ENCODE measurements at regions of chr18 and their contacts with region 1.

Region 1: GRCh38 chr18:36688020-36688965 is 140.5 kb downstream of the TPGS2 start:
- DNase-seq: no peak
- H3K4me3 ChIP-seq: no peak overlapping the region
- CTCF ChIP-seq: peak; percentile 89

Region 2: GRCh38 chr18:36582988-36583745 is 105.1 kb before region 1 on chr18:
- CTCF ChIA-PET with region 1: no interaction called
- POLR2A ChIA-PET with region 1: no interaction called
- DNase-seq: no peak
- H3K4me3 ChIP-seq: no peak overlapping the region
- CTCF ChIP-seq: no peak

Region 3: DNA sequence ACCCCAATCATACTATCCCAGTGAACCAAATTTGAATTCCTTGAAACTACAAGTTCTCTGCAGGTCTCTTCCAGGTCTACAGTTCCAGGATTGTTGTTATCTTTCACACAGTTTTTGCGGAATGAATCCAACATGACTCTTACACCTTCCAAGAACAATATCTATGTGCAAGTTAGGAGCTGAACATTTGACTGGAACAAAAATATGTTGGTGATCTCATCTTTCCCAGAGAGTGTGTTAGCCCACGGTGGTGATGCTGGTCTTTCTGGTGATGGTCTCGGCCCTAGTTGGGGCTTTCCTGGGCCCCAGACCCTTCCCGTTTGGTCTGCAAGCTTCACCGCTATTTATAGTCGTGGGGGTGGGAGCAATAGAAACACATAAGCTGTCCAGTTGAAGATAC is 33.2 kb before region 1 on chr18:
- CTCF ChIA-PET with region 1: interaction called, 12 read pairs
- POLR2A ChIA-PET with region 1: no interaction called
- DNase-seq: no peak
- H3K4me3 ChIP-seq: no peak overlapping the region
- CTCF ChIP-seq: no peak

Region 4: GRCh38 chr18:36665952-36666351 is 22.3 kb before region 1 on chr18:
- CTCF ChIA-PET with region 1: interaction called, 38 read pairs
- POLR2A ChIA-PET with region 1: no interaction called
- DNase-seq: no peak
- H3K4me3 ChIP-seq: no peak overlapping the region
- CTCF ChIP-seq: no peak

Region 5: DNA sequence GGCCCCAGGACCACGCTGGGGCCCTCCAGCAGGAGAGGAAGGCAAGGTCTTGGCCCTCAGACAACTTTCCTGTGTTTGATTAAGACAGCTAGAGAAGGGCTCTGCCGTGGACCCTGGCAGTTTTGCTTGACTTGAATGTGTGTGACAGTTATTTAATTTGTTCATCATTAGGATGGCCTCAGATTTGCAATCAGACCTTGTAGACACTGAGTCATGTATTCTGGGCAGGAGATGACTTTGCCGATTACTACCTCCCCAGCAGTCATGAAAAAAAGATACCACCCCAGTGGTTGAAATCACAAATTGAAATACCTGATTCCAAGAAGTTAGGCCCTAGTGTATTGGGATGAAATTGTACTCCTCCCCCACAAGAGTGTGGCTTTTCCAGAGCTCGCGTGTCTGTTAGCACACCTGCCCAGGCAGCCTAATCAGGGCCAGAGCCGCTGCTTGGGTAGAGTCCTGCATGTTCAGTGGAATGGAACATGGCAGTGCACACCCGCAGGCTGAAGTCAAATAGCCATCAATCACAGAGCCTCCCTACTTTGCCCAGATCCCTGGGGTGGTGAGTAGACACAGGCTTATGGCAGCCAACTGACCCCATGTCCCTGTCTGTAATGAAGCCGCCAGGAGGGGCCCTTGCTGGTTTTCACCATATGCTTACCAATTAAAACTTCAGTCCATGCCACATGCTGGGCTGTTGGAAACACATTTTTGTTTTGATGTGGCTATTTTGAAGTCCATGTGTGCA is 18.0 kb after region 1 on chr18:
- CTCF ChIA-PET with region 1: interaction called, 32 read pairs
- POLR2A ChIA-PET with region 1: interaction called, 6 read pairs
- DNase-seq: no peak
- H3K4me3 ChIP-seq: no peak overlapping the region
- CTCF ChIP-seq: no peak

Region 6: DNA sequence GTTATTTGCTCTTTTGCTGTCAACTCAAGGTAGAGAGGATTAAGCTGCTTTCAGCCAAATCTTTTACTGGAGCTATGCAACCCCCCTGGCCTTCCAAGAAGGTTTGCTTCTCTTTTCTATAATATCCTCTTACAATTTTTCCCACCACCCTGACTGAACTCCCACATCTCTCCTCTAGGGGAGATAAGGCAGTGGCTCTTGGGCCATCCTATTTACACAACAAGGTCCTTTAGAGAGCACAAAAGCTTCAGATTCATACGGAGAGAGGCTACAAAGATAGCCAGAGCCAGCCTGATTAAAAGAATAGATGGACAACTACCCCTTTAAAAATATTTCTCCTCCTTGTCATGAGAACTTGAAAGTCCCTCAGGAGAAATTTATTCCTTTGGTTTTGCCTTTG is 44.9 kb after region 1 on chr18:
- CTCF ChIA-PET with region 1: interaction called, 13 read pairs
- POLR2A ChIA-PET with region 1: no interaction called
- DNase-seq: no peak
- H3K4me3 ChIP-seq: no peak overlapping the region
- CTCF ChIP-seq: no peak

Region 7: GRCh38 chr18:36757081-36757480 is 68.8 kb after region 1 on chr18:
- CTCF ChIA-PET with region 1: interaction called, 113 read pairs
- POLR2A ChIA-PET with region 1: no interaction called
- DNase-seq: peak; percentile 49
- H3K4me3 ChIP-seq: no peak overlapping the region
- CTCF ChIP-seq: peak; percentile 58

Region 8: GRCh38 chr18:36828630-36829361 is 140.5 kb after region 1 on chr18 and contains the starts of genes KIAA1328 and TPGS2:
- CTCF ChIA-PET with region 1: interaction called, 10 read pairs
- POLR2A ChIA-PET with region 1: no interaction called
- DNase-seq: no peak
- H3K4me3 ChIP-seq: peak within 1 kb of the TSS; percentile 98
- CTCF ChIP-seq: peak; percentile 75

Measured in AG04449 (cell line).